ENCODE measurements at regions of chr5 and their contacts with region 1.

Region 1: DNA sequence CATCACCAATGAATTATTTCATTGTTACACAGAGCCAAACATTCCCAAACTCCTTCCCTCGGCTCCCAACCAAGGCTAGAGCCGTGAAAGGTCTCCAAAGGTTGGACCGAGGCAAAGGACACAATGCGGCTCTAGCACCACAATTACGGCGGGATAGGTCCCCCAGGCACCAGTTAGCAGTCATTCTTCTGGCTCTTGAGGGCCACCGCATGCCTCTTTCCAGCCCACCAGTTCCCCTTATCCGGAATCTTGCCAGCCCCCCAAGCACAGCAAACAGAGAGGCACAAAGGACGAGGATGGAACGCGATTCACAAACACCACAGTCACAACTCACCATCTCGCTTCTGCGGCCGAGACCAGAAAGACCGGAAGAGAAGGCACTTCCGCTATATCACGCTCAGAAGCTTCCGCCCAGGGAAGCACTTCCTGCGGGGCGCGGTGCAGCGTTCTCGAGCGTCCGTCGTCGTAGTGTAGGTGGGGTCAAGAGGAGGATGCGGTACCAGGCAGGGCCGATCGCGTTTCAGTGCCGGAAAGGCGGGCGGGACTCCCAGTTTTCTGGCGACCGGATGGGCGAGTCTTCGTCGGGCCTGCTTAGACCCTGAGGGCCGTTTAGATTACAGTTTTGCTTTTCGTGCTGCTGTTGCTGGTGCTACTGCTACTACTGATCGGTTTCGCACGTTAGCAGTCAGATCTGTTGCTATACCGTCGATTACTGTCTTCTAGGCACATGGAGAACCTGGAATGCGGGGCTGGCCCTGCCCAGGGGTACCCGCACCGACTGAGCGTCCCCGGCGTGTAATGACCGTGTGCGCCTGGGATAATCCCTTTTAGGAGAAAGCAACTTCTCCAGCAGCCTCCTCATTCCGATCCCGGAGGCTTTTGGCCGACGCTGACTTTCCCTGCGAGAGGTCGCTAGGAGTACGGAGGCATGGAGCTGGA is at the start of gene RPL37:
- DNase-seq: peak; percentile 89
- H3K4me3 Mint-ChIP-seq: peak within 1 kb of the TSS; percentile 95
- H3K27ac Mint-ChIP-seq: peak within 1 kb of the TSS; percentile 90
- H3K4me1 Mint-ChIP-seq: peaks cover 45% of the 10 kb centered on the region
- H3K27me3 Mint-ChIP-seq: no peaks in the 10 kb centered on the region
- total RNA-seq, gene RPL37: 1,451 and 1,473 TPM in 2 replicates

Region 2: DNA sequence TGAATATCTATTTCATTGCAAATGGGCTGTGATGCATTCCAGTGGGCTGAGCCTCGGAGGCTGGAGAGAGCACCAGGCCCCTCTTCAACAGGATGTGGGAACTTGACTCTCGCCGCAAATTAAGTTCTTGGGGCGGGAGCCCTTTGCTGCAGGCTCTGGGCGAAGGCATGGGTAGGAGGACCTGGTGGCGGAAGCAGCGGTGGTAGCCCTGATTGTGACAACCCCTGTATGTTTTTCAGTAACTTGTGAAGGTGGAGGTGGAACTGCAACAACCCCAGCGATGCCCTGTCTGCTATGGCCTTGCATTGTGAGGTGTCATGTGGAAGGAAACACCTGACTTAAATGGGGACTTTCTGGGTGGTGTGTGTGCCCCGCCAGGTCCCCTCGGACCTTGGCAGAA is 1625.2 kb before region 1 on chr5:
- intact Hi-C with region 1: loop called (anchors 10 kb)
- DNase-seq: peak; percentile 78
- H3K4me3 Mint-ChIP-seq: peak overlapping the region; percentile 67
- H3K27ac Mint-ChIP-seq: peak overlapping the region; percentile 92
- H3K4me1 Mint-ChIP-seq: peaks cover 94% of the 10 kb centered on the region
- H3K27me3 Mint-ChIP-seq: no peaks in the 10 kb centered on the region

Region 3: DNA sequence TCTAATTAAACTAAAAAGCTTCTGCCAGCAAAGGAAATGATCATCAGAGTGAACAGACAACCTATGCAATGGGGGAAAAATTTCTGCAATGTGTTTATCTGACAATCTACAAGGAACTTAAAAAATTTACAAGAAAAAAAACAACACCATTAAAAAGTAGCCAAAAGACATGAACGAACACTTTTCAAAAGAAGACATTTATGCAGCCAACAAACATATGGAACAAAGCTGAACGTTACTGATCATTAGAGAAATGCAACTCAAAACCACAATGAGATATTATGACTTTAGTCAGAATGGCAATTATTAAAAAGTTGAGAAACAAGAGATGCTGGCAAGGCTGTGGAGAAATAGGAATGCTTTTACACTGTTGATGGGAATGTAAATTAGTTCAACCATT is 880.0 kb before region 1 on chr5:
- intact Hi-C with region 1: no loop called
- DNase-seq: no peak
- H3K4me3 Mint-ChIP-seq: no peak overlapping the region
- H3K27ac Mint-ChIP-seq: no peak overlapping the region
- H3K4me1 Mint-ChIP-seq: no peaks in the 10 kb centered on the region
- H3K27me3 Mint-ChIP-seq: peaks cover 2% of the 10 kb centered on the region

Region 4: GRCh38 chr5:40755407-40756365 is 79.4 kb before region 1 on chr5 and contains the start of gene TTC33:
- intact Hi-C with region 1: loop called (anchors 1 kb)
- DNase-seq: peak; percentile 92
- H3K4me3 Mint-ChIP-seq: no peak within 1 kb of the TSS
- H3K27ac Mint-ChIP-seq: peak within 1 kb of the TSS; percentile 41
- H3K4me1 Mint-ChIP-seq: peaks cover 21% of the 10 kb centered on the region
- H3K27me3 Mint-ChIP-seq: no peaks in the 10 kb centered on the region
- total RNA-seq, gene TTC33: 23.4 and 24.6 TPM in 2 replicates

Region 5: GRCh38 chr5:40813698-40814281 is 21.3 kb before region 1 on chr5:
- intact Hi-C with region 1: loop called (anchors 1 kb)
- DNase-seq: no peak
- H3K4me3 Mint-ChIP-seq: peak overlapping the region; percentile 47
- H3K27ac Mint-ChIP-seq: peak overlapping the region; percentile 49
- H3K4me1 Mint-ChIP-seq: peaks cover 13% of the 10 kb centered on the region
- H3K27me3 Mint-ChIP-seq: peaks cover 2% of the 10 kb centered on the region

Region 6: GRCh38 chr5:41869739-41870626 is 1034.9 kb after region 1 on chr5 and contains the start of gene OXCT1:
- intact Hi-C with region 1: loop called (anchors 10 kb)
- DNase-seq: peak; percentile 92
- H3K4me3 Mint-ChIP-seq: peak within 1 kb of the TSS; percentile 94
- H3K27ac Mint-ChIP-seq: peak within 1 kb of the TSS; percentile 96
- H3K4me1 Mint-ChIP-seq: peaks cover 56% of the 10 kb centered on the region
- H3K27me3 Mint-ChIP-seq: no peaks in the 10 kb centered on the region
- total RNA-seq, gene OXCT1: 84.4 and 85.1 TPM in 2 replicates